Activated CD8-positive, alpha-beta T cell treated with anti-CD3 and anti-CD28 coated beads for 36 hours (primary cell): ENCODE measurements at regions of chr13 and their contacts with region 1.

Region 1: GRCh38 chr13:36736119-36736726 is 62.4 kb downstream of the SERTM1 start:
- DNase-seq: peak; percentile 52
- ATAC-seq: no peak
- H3K4me3 Mint-ChIP-seq: no peak overlapping the region
- H3K27ac Mint-ChIP-seq: no peak overlapping the region
- H3K4me1 Mint-ChIP-seq: no peaks in the 10 kb centered on the region
- H3K27me3 Mint-ChIP-seq: peaks cover 3% of the 10 kb centered on the region
- CTCF ChIP-seq: peak; percentile 82

Region 2: GRCh38 chr13:36282818-36283445 is 453.3 kb before region 1 on chr13:
- CTCF ChIA-PET with region 1: interaction called, 16 read pairs
- POLR2A ChIA-PET with region 1: no interaction called
- intact Hi-C with region 1: no loop called
- DNase-seq: no peak
- ATAC-seq: no peak
- H3K4me3 Mint-ChIP-seq: no peak overlapping the region
- H3K27ac Mint-ChIP-seq: no peak overlapping the region
- H3K4me1 Mint-ChIP-seq: no peaks in the 10 kb centered on the region
- H3K27me3 Mint-ChIP-seq: peaks cover 11% of the 10 kb centered on the region
- CTCF ChIP-seq: peak; percentile 81

Region 3: DNA sequence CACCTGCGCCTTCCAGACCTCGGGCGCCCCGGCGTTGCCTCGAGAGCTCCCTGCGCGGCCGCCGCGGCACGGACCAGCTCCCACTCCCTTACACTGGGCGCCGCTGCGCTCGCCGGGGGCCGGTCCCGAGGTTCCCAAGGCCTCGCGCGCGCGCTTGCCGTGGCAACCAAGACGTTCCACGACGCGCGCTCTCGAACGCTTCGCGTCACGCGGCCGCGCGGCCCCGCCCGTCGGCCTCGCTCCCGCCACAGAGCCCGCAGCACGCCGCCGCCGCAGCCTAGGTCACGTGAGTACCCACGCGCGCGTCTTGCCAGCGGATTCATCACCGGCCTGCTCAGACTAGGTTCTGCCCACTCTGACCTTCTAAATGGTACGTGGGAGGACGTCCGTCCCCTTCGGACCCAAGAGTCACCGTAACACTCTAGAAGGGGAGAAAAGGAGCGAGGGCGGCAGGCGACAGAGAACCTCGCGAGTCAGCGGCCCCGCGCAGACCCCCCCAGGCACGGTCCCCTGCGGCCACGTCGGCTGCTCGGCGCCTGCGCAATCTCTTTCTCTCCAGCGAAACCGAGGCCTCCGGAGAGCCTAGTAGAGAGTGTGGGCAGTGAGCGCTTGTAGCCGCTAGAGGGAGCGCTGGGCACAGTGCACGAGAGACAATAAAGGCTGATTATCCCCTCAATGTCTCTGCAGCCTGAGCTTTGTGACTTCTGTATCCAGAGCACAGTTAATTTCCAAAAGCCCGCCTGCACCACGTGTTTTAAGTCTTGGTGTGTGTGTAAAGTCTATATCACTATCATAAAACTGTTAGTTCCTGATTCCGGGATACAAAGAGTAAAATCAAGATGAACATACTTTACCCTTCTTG is 389.8 kb before region 1 on chr13 and contains the start of gene SPART:
- CTCF ChIA-PET with region 1: interaction called, 9 read pairs
- POLR2A ChIA-PET with region 1: no interaction called
- intact Hi-C with region 1: loop called (anchors 10 kb)
- DNase-seq: peak; percentile 91
- ATAC-seq: peak; percentile 96
- H3K4me3 Mint-ChIP-seq: peak within 1 kb of the TSS; percentile 77
- H3K27ac Mint-ChIP-seq: peak within 1 kb of the TSS; percentile 90
- H3K4me1 Mint-ChIP-seq: peaks cover 22% of the 10 kb centered on the region
- H3K27me3 Mint-ChIP-seq: peaks cover 2% of the 10 kb centered on the region
- CTCF ChIP-seq: peak; percentile 91
- total RNA-seq, gene SPART: 16.0 to 16.4 TPM

Region 4: GRCh38 chr13:36420437-36420891 is 315.8 kb before region 1 on chr13:
- CTCF ChIA-PET with region 1: interaction called, 34 read pairs
- POLR2A ChIA-PET with region 1: no interaction called
- intact Hi-C with region 1: loop called (anchors 10 kb)
- DNase-seq: peak; percentile 82
- ATAC-seq: peak; percentile 81
- H3K4me3 Mint-ChIP-seq: no peak overlapping the region
- H3K27ac Mint-ChIP-seq: no peak overlapping the region
- H3K4me1 Mint-ChIP-seq: peaks cover 11% of the 10 kb centered on the region
- H3K27me3 Mint-ChIP-seq: peaks cover 39% of the 10 kb centered on the region
- CTCF ChIP-seq: peak; percentile 71

Region 5: GRCh38 chr13:36453516-36453915 is 282.7 kb before region 1 on chr13:
- CTCF ChIA-PET with region 1: interaction called, 12 read pairs
- POLR2A ChIA-PET with region 1: no interaction called
- intact Hi-C with region 1: no loop called
- DNase-seq: no peak
- ATAC-seq: no peak
- H3K4me3 Mint-ChIP-seq: no peak overlapping the region
- H3K27ac Mint-ChIP-seq: no peak overlapping the region
- H3K4me1 Mint-ChIP-seq: no peaks in the 10 kb centered on the region
- H3K27me3 Mint-ChIP-seq: peaks cover 15% of the 10 kb centered on the region
- CTCF ChIP-seq: peak; percentile 7